ENCODE measurements at regions of chr18 and their contacts with region 1.

Region 1: DNA sequence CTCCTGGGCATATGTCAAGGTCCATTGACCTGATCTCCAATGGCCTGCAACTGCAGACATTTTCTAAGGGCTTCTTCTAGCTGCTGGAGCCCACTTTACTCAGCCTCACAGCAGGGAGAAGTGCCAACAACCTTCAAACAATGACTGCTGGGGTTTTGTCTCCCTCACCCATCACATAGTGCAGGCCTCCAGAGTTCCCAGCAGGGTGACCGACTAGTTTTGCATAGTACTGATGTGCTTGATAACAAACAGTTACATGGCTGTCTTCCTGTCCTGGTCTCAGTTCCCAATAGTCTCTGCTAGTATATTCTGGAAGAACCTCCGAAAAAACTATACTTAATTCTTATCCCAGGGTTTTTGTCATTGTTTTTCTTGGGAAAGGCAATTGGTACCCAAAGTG is 10.4 kb upstream of the NETO1 start:
- DNase-seq: no peak
- ATAC-seq: no peak
- H3K4me3 ChIP-seq: no peak overlapping the region
- H3K27ac ChIP-seq: no peak overlapping the region
- H3K4me1 ChIP-seq: peaks cover 3% of the 10 kb centered on the region
- H3K27me3 ChIP-seq: no peaks in the 10 kb centered on the region

Region 2: GRCh38 chr18:72826736-72827135 is 51.4 kb before region 1 on chr18:
- intact Hi-C with region 1: loop called in 1 of 4 experiments (anchors 10 kb)
- DNase-seq: peak in 1 of 3 donors; percentile 24
- ATAC-seq: no peak
- H3K4me3 ChIP-seq: no peak overlapping the region
- H3K27ac ChIP-seq: no peak overlapping the region
- H3K4me1 ChIP-seq: no peaks in the 10 kb centered on the region
- H3K27me3 ChIP-seq: no peaks in the 10 kb centered on the region

Region 3: DNA sequence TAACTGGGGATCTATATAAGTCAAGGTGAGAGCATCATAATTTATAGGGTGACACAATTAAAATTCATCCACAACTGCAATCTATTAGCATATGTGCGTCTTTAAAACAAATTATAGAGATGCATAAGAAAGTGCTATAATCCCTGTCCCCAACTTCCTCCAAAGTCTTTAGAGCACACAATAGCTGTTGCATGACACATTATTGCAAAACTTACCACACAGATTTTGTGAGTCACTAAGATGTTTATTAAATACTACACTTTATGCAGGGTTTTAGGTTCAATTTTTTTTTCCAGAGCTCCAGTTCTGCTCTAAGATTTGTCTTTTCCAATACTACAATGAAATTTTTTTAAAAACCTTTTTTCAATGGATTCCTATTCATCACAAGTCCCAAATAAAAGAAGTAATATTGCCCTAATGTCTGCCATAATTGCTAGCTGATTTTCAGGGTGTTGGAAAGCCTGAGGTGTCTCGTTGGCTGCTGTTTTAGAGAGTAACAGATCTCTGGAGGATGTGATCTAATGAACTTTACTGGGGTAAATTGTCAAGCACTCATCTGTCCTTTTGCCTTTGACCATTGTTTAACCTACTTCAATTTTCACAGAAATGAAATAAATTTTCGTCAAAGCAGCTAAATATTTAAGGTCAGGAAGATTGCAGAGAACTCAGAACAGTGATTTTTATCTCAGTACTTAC is 240.1 kb after region 1 on chr18:
- intact Hi-C with region 1: no loop called
- DNase-seq: no peak
- ATAC-seq: no peak
- H3K4me3 ChIP-seq: no peak overlapping the region
- H3K27ac ChIP-seq: no peak overlapping the region
- H3K4me1 ChIP-seq: no peaks in the 10 kb centered on the region
- H3K27me3 ChIP-seq: no peaks in the 10 kb centered on the region